T-cell (primary cell): ENCODE measurements at regions of chr12 and their contacts with region 1.

Region 1: GRCh38 chr12:56359851-56360767 is at the start of gene STAT2:
- DNase-seq: peak; percentile 97 to 100 (median 99)
- ATAC-seq: peak; percentile 95 to 98 (median 96)
- H3K4me3 ChIP-seq: peak within 1 kb of the TSS; percentile 75 to 85
- H3K4me3 Mint-ChIP-seq: peak within 1 kb of the TSS; percentile 84 to 96 (median 95)
- H3K27ac ChIP-seq: peak within 1 kb of the TSS; percentile 52
- H3K27ac Mint-ChIP-seq: peak within 1 kb of the TSS; percentile 94 to 98
- H3K4me1 ChIP-seq: peaks cover 8 to 24% of the 10 kb centered on the region in 2 experiments
- H3K4me1 Mint-ChIP-seq: peaks cover 29 to 37% (median 36%) of the 10 kb centered on the region in 3 donors
- H3K27me3 ChIP-seq: no peaks in the 10 kb centered on the region
- H3K27me3 Mint-ChIP-seq: no peaks in the 10 kb centered on the region
- total RNA-seq, gene STAT2: 117 to 187 (median 162) TPM

Region 2: GRCh38 chr12:56333679-56334489 is 26.2 kb before region 1 on chr12 and contains the start of gene PAN2:
- CTCF ChIA-PET with region 1: interaction called in 1 of 2 experiments, 19 read pairs
- POLR2A ChIA-PET with region 1: interaction called, 4 to 17 read pairs
- DNase-seq: peak; percentile 77 to 97 (median 93)
- ATAC-seq: peak; percentile 84 to 85 (median 85)
- H3K4me3 ChIP-seq: peak within 1 kb of the TSS; percentile 63 to 88
- H3K4me3 Mint-ChIP-seq: peak within 1 kb of the TSS; percentile 85 to 97 (median 92)
- H3K27ac ChIP-seq: peak within 1 kb of the TSS; percentile 98
- H3K27ac Mint-ChIP-seq: peak within 1 kb of the TSS; percentile 100
- H3K4me1 ChIP-seq: peaks cover 10 to 34% of the 10 kb centered on the region in 2 experiments
- H3K4me1 Mint-ChIP-seq: peaks cover 43 to 53% (median 47%) of the 10 kb centered on the region in 3 donors
- H3K27me3 ChIP-seq: no peaks in the 10 kb centered on the region
- H3K27me3 Mint-ChIP-seq: no peaks in the 10 kb centered on the region
- total RNA-seq, gene PAN2: 126 to 187 (median 164) TPM

Region 3: DNA sequence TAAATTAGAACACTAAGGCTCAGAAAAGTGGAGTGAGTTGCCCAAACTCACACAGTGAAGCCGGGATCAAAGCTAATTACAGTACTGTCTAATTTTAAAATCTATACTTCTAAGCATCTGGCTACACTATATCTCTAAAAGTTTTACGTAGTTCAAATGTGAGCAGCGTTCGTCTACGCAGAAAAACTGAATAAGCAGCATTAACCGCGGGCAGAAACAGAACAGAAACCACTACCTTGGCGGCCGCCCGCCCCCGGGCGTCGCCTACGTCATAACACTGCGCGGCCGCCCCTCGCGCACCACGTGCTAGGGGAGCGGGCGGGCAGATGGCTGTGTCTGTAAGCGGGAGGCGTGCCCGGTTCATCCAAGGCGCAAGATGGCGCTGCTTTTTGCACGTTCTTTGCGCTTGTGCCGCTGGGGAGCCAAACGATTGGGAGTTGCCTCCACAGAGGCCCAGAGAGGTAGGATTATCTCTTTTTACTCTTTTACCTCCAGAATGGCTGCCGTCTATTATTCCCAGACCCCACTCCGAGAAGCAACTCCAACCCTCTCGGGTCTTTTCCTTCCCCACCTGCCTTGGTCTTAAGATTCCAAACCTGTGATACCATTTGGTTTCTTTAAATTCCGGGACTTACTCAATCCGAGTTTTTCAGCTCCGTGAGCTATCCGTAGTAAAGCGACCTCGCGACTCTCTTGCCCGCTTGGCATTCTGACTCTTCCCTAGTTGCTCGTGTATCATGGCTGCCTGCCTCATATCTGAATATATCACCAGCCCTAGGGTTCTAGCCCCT is 108.3 kb after region 1 on chr12 and contains the start of gene SPRYD4:
- CTCF ChIA-PET with region 1: interaction called in 1 of 2 experiments, 31 read pairs
- POLR2A ChIA-PET with region 1: no interaction called
- DNase-seq: peak; percentile 86 to 97 (median 93)
- ATAC-seq: peak; percentile 94 to 98 (median 96)
- H3K4me3 ChIP-seq: peak within 1 kb of the TSS; percentile 68 to 84
- H3K4me3 Mint-ChIP-seq: peak within 1 kb of the TSS; percentile 94 to 97 (median 94)
- H3K27ac ChIP-seq: peak within 1 kb of the TSS; percentile 82
- H3K27ac Mint-ChIP-seq: peak within 1 kb of the TSS; percentile 89 to 98
- H3K4me1 ChIP-seq: peaks cover 5 to 23% of the 10 kb centered on the region in 2 experiments
- H3K4me1 Mint-ChIP-seq: peaks cover 29 to 33% (median 32%) of the 10 kb centered on the region in 3 donors
- H3K27me3 ChIP-seq: no peaks in the 10 kb centered on the region
- H3K27me3 Mint-ChIP-seq: no peaks in the 10 kb centered on the region
- total RNA-seq, gene SPRYD4: 4.7 to 7.3 (median 5.5) TPM